Activated CD4-positive, alpha-beta memory T cell treated with anti-CD3 and anti-CD28 coated beads for 36 hours (primary cell): ENCODE measurements at regions of chr4 and their contacts with region 1.

Region 1: GRCh38 chr4:89101256-89102161 is 9.8 kb upstream of the TIGD2 start:
- DNase-seq: no peak
- H3K4me3 Mint-ChIP-seq: no peak overlapping the region
- H3K27ac Mint-ChIP-seq: peak overlapping the region; percentile 41
- H3K4me1 Mint-ChIP-seq: peaks cover 14% of the 10 kb centered on the region
- H3K27me3 Mint-ChIP-seq: peaks cover 7% of the 10 kb centered on the region

Region 2: DNA sequence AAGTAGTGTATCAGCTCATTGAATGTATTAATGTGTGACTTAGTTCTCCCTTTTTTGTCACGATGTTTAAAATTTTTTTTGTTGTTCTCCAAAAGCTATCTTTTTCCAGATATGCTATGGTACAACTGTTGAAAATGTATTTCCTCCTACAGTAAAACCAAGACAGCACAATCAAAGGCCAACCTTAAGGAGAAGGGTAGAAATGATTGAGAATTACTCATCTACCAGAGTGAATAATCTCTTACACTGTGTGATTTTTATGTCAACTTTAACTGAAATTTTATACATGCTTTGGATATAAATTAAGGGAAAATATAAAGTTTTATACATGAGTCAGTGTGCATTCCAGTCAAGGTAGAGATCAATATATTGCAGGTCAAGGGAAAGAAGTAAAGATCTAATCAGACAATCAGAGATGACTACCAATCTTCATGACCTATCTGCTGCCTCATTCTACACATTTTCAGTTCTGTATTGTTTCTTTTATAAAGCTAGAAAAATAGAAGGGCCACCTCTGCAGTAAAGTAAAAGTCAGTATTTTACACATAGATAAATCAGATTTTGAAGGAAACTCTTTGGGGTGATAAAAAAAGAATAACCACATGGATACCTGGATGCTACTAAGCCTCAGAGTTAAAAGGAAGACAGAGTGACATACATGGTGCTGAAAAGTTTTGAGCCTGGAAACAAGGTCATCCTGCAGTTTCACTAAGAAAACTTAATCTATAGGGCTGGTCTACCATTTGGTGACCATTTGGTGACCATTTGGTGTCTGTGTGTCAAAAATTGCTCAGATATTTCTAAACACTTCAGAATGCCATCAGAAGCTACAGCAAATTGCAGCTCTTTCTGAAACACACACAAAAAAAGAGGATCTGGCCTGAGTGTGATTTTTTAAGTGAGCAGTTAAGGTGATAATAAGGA is 46.1 kb before region 1 on chr4:
- CTCF ChIA-PET with region 1: no interaction called
- POLR2A ChIA-PET with region 1: no interaction called
- intact Hi-C with region 1: loop called (anchors 2 kb)
- DNase-seq: no peak
- H3K4me3 Mint-ChIP-seq: no peak overlapping the region
- H3K27ac Mint-ChIP-seq: no peak overlapping the region
- H3K4me1 Mint-ChIP-seq: peaks cover 28% of the 10 kb centered on the region
- H3K27me3 Mint-ChIP-seq: peaks cover 9% of the 10 kb centered on the region

Region 3: GRCh38 chr4:89077761-89078160 is 23.7 kb before region 1 on chr4:
- CTCF ChIA-PET with region 1: no interaction called
- POLR2A ChIA-PET with region 1: no interaction called
- intact Hi-C with region 1: loop called (anchors 1 kb)
- DNase-seq: no peak
- H3K4me3 Mint-ChIP-seq: no peak overlapping the region
- H3K27ac Mint-ChIP-seq: no peak overlapping the region
- H3K4me1 Mint-ChIP-seq: peaks cover 5% of the 10 kb centered on the region
- H3K27me3 Mint-ChIP-seq: peaks cover 6% of the 10 kb centered on the region